Posterior vena cava (tissue), 2 donors: ENCODE measurements at regions of chr4 and their contacts with region 1.

Region 1: DNA sequence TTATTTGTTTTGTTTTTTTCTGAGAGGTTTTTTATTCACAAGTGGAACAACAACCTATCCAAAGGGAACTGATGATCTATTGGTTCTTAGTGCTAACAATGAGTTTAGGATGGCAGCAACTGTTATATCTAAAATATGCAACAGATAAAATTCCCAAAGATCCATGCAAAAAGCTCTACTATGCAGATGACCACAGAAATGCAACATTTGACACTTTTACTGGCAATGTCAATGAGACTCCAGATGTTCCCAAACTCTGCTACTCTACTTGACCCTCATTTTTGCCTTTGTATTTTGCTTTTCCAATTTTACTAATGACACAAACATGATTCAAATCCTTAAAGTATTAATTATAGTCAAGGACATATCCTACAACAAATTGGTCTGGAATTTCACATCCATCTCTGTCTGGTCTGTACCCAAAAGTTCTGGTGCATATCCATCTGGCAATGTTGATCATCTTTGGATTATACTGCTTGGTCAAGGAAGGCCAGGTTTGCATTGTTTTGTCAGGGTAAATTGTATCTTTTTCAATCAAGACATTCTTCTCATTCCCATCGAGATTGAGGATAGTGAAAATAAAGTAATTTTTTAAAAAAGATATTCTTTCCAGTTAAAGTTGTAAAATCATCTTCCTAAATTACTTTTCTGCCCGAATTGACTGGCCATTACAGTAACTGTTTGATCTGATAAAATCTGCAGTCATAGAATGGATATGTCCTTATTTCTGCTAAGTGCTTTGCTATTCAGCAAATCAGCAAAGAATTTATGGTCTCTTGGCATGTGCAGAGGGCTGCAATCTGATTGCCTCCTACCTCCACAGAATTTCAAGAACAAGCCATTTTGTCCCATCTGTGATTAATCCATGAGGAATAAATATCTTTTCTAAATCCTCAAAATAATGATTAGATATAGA is 73.6 kb downstream of the FGFBP1 start:
- DNase-seq: no peak

Region 2: GRCh38 chr4:16360701-16361262 is 495.9 kb after region 1 on chr4:
- intact Hi-C with region 1: loop called in 1 of 2 experiments (anchors 5 kb)
- DNase-seq: no peak